Vagina (tissue), 2 donors: ENCODE measurements at regions of chr6 and their contacts with region 1.

Region 1: DNA sequence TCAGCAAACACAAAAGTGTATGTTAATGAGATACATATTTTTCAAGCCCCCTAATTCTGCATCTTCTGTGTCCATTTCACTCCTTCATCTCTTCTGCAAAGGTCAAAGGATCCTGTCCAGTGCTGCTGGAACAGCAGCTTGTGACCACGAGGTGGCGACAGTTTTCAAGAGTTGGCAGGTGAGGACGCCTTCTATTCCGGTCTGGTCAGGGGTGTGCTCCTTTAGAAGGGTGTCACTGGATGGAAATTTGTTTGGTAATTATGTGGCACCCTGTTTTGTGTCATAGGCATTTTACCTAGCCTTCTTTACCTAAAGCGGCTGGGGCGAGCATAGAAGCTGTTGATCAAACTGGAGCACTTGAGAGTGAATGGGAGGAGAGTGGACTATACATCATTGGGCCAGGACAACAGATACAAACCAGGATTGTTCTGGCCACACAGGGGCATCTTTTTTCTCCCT is 32.9 kb upstream of the ERVFRD-1 start:
- DNase-seq: no peak
- H3K4me3 ChIP-seq: no peak overlapping the region
- H3K27ac ChIP-seq: no peak overlapping the region
- H3K4me1 ChIP-seq: peaks cover 15% of the 10 kb centered on the region
- H3K27me3 ChIP-seq: no peaks in the 10 kb centered on the region
- CTCF ChIP-seq: peak; percentile 80 to 94 (median 88)
- POLR2A ChIP-seq: no peak

Region 2: DNA sequence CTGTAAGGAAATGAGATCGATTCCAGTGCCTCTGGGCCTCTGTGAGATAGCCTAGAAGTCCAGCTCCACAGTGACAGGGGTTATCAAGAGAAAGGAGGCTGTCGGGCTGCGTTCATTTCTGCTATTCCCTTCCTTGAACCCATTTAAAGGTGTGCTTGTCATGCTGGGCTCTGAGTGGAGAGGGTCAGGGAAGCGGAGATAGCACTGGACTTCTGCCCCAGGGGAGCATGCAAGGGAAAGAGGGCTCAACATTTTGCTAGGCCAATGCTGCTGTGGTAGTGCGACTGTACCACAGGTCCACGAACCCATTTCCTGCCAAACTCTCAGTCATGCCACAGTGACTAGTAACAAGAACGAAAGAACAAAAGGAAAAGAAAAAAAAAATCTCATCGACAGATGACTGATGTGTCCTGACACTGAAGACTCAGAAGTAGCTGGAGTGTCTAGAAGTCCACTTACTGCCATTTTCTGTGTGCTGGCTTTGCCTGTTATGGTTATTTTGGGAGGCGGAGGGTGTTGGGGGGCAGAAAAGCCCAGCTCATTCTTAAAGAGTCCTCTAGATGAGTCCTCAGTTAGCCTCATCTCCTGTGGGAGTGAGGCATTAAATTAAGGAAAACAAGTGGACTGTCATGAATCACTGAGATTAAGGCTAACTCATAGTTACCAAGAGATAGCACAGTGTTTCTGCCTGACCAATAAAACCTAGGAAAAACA is 80.0 kb after region 1 on chr6:
- intact Hi-C with region 1: no loop called
- DNase-seq: no peak
- H3K4me3 ChIP-seq: no peak overlapping the region
- H3K27ac ChIP-seq: peak overlapping the region; percentile 50
- H3K4me1 ChIP-seq: peaks cover 49% of the 10 kb centered on the region
- H3K27me3 ChIP-seq: no peaks in the 10 kb centered on the region
- CTCF ChIP-seq: no peak
- POLR2A ChIP-seq: no peak

Region 3: GRCh38 chr6:11496152-11497060 is 352.0 kb after region 1 on chr6:
- intact Hi-C with region 1: loop called (anchors 5 kb)
- DNase-seq: no peak
- H3K4me3 ChIP-seq: no peak overlapping the region
- H3K27ac ChIP-seq: peak overlapping the region; percentile 22
- H3K4me1 ChIP-seq: no peaks in the 10 kb centered on the region
- H3K27me3 ChIP-seq: no peaks in the 10 kb centered on the region
- CTCF ChIP-seq: peak; percentile 81 to 98 (median 96)
- POLR2A ChIP-seq: no peak

Region 4: GRCh38 chr6:11585426-11586016 is 441.1 kb after region 1 on chr6:
- intact Hi-C with region 1: no loop called
- DNase-seq: no peak
- H3K4me3 ChIP-seq: no peak overlapping the region
- H3K27ac ChIP-seq: no peak overlapping the region
- H3K4me1 ChIP-seq: peaks cover 7% of the 10 kb centered on the region
- H3K27me3 ChIP-seq: no peaks in the 10 kb centered on the region
- CTCF ChIP-seq: peak; percentile 39 to 49 (median 43)
- POLR2A ChIP-seq: no peak